ENCODE measurements at regions of chr16 and their contacts with region 1.

Region 1: GRCh38 chr16:4402439-4403132 is 13.8 kb downstream of the CORO7 start:
- DNase-seq: peak; percentile 81 to 92 (median 90)
- H3K4me3 ChIP-seq: no peak overlapping the region
- H3K27ac ChIP-seq: no peak overlapping the region
- H3K4me1 ChIP-seq: no peaks in the 10 kb centered on the region
- H3K27me3 ChIP-seq: no peaks in the 10 kb centered on the region
- CTCF ChIP-seq: peak; percentile 93 to 99 (median 98)
- EP300 ChIP-seq: no peak
- POLR2A ChIP-seq: no peak

Region 2: DNA sequence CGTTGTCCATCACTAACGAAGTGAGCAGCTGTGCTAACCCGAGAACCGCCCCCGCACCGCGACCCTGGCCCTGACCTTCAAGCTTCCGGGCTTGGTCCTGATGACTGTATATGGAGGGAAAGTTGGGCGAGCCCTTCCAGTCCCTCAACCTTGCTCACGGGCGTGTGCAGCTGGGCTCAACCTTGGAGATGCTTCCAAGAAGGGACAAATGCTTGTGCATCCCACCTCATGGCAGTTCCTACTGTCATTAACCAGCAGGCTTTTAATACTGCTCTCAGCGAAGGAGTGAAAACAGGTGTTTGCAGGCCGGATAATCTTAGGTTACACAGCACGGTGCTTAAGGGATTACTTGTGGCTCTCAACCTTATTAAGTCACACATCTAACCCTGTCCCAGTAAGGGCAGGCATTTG is 194.2 kb before region 1 on chr16:
- intact Hi-C with region 1: loop called in 1 of 4 experiments (anchors 5 kb)
- DNase-seq: peak; percentile 57 to 82 (median 65)
- H3K4me3 ChIP-seq: no peak overlapping the region
- H3K27ac ChIP-seq: no peak overlapping the region
- H3K4me1 ChIP-seq: peaks cover 4% of the 10 kb centered on the region
- H3K27me3 ChIP-seq: no peaks in the 10 kb centered on the region
- CTCF ChIP-seq: no peak
- EP300 ChIP-seq: no peak
- POLR2A ChIP-seq: no peak

Region 3: GRCh38 chr16:4288148-4288921 is 114.3 kb before region 1 on chr16:
- intact Hi-C with region 1: loop called in 1 of 4 experiments (anchors 5 kb)
- DNase-seq: peak; percentile 72 to 86 (median 82)
- H3K4me3 ChIP-seq: peak overlapping the region; percentile 12
- H3K27ac ChIP-seq: no peak overlapping the region
- H3K4me1 ChIP-seq: peaks cover 7% of the 10 kb centered on the region
- H3K27me3 ChIP-seq: no peaks in the 10 kb centered on the region
- CTCF ChIP-seq: peak; percentile 80 to 96 (median 92)
- EP300 ChIP-seq: no peak
- POLR2A ChIP-seq: no peak

Region 4: DNA sequence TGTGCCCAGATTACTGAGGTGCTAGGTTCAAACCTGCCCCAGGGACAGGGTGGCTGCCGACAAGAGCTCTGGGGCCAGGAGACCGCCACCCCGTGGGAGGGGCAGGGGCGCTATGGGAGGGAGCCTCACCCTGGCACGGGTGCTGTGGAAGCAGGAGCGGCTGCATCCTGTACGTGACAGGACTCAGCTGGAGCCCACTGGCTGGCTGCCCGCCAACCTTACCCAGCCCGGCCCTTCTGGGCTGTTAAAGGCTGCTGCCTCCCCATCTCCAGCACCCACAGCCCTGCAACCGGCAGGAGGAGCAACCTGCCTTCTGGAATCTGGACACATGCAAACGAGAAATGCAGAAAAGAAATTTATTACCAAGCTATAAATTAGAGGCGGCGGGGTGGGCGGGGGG is 62.7 kb before region 1 on chr16:
- intact Hi-C with region 1: no loop called
- DNase-seq: peak; percentile 69 to 83 (median 81)
- H3K4me3 ChIP-seq: no peak overlapping the region
- H3K27ac ChIP-seq: peak overlapping the region in 1 of 2 donors; percentile 44
- H3K4me1 ChIP-seq: peaks cover 4% of the 10 kb centered on the region
- H3K27me3 ChIP-seq: no peaks in the 10 kb centered on the region
- CTCF ChIP-seq: no peak
- EP300 ChIP-seq: no peak
- POLR2A ChIP-seq: no peak

Region 5: DNA sequence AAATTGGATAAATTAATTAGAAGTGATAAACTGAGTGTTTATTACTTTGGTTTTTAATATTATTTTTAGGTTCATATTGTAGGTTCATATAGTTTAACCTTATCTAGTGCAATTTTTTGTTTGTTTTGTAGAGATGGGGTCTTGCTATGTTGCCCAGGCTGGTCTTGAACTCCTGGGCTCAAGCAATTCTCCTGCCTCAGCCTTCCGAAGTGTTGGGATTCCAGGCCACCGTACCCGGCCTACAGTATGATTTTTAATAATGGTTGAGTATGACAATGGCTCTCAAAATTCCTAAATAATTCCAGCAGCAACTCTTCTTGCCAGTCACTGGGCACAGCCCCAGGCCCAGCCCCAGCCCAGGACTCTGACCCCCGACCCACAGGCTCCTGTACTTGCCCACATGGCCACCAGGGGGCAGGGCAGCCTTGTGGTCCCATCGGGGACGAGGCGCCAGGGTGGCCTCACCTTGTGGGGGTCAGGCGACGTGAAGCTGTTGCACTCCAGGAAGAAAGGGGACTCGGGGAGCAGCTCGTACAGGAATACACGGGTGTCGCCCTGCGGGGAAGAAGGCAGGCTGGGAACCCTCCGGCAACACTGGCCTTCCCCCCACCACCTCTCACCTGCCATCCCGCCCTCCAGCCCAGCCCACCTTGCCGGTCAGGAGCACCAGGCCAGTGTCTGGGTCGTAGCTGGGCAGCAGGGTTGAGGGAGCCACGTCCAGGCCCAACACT is 43.6 kb before region 1 on chr16:
- intact Hi-C with region 1: loop called (anchors 1 to 2 kb)
- DNase-seq: peak; percentile 65 to 83 (median 81)
- H3K4me3 ChIP-seq: no peak overlapping the region
- H3K27ac ChIP-seq: no peak overlapping the region
- H3K4me1 ChIP-seq: no peaks in the 10 kb centered on the region
- H3K27me3 ChIP-seq: no peaks in the 10 kb centered on the region
- CTCF ChIP-seq: peak; percentile 85 to 98 (median 96)
- EP300 ChIP-seq: no peak
- POLR2A ChIP-seq: no peak

Measured in ovary (tissue), 10 donors.